ENCODE measurements at regions of chr6 and their contacts with region 1.

Region 1: GRCh38 chr6:32868257-32868788 is 14.3 kb downstream of the PSMB9 start:
- DNase-seq: peak; percentile 90
- H3K4me3 ChIP-seq: peak overlapping the region; percentile 51
- H3K27ac ChIP-seq: peak overlapping the region; percentile 94
- H3K4me1 ChIP-seq: peaks cover 45% of the 10 kb centered on the region
- CTCF ChIP-seq: peak; percentile 99

Region 2: DNA sequence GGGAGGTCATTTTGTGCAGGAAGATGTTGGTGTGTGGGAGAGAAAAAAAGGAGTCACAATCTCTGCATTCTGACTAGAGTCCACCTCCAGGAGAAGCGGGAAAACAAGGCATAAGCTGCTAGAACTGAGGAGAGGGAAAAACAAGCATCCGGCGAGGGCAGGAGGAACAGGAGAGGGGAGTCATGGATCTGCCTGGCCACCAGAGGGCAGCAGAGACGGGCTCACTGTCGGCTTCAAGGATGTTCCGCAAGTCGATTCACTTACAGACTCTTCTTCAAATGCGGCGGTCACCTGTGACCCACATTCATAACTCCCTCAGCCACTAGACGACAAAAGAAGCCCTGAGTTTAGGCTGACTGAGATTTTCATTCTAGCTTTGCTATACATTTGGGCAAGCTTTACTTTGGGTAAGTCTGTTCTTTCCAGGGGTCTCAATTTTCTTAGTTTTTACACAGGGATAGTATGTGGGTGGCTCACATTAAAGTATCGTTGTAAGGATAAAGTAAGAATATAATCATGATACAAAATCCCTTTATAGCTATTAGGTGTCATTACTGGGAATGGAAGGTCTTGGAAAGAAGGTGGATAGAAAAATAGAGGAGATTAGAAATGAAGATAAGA is 454.8 kb before region 1 on chr6:
- CTCF ChIA-PET with region 1: no interaction called
- POLR2A ChIA-PET with region 1: interaction called, 4 read pairs
- intact Hi-C with region 1: loop called (anchors 5 kb)
- DNase-seq: peak; percentile 82
- H3K4me3 ChIP-seq: no peak overlapping the region
- H3K27ac ChIP-seq: no peak overlapping the region
- H3K4me1 ChIP-seq: peaks cover 9% of the 10 kb centered on the region
- CTCF ChIP-seq: peak; percentile 96

Region 3: GRCh38 chr6:32622545-32623401 is 245.6 kb before region 1 on chr6:
- CTCF ChIA-PET with region 1: no interaction called
- POLR2A ChIA-PET with region 1: no interaction called
- intact Hi-C with region 1: loop called (anchors 10 kb)
- DNase-seq: peak; percentile 85
- H3K4me3 ChIP-seq: peak overlapping the region; percentile 49
- H3K27ac ChIP-seq: peak overlapping the region; percentile 91
- H3K4me1 ChIP-seq: peaks cover 69% of the 10 kb centered on the region
- CTCF ChIP-seq: peak; percentile 83

Region 4: GRCh38 chr6:32796848-32797776 is 71.2 kb before region 1 on chr6:
- CTCF ChIA-PET with region 1: interaction called, 7 read pairs
- POLR2A ChIA-PET with region 1: interaction called, 3 read pairs
- intact Hi-C with region 1: loop called (anchors 2 kb)
- DNase-seq: peak; percentile 85
- H3K4me3 ChIP-seq: peak overlapping the region; percentile 44
- H3K27ac ChIP-seq: peak overlapping the region; percentile 57
- H3K4me1 ChIP-seq: peaks cover 34% of the 10 kb centered on the region
- CTCF ChIP-seq: peak; percentile 97

Region 5: DNA sequence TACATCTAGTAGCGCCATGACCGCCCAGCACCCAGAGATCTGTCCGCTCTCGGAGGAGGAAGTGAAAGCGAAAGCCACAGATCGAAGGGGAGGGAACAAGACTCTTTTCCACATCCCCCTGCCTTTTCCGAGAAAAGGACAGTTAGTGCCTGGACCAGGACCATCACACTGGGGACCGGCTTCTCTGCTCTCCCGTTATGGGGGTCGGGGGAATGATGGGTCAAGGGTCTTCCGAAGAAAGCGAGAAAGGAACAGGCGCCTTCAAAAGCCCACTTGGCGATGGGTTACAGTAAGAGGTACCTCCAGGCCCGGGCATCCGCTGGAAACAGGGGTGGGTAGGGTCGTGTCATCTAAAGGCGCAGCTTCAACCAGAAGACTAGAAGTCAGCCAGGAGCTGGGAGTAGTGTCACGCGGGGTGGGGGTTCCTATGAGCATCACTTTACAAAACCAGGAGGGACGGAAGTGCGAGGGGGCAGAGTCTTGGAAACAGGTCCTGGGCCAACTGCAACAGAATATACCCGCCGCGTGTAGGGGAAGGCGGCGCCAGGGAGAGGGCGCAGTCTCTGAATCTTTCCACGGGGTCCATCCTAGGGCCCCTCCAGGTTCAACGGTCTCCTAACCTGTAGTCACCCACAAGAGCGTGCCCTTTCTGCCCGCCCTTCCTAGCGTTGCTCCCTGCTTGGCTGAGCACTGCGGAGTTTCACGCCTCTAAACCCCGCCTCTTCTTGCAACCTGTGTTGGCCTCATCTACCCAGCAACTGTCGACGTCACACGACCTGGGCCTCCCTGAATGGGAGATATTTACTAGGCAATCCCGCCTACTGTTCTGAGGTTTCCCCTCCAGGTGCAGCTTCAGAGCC is 24.1 kb before region 1 on chr6 and contains the start of gene PSMB8:
- CTCF ChIA-PET with region 1: interaction called, 35 read pairs
- POLR2A ChIA-PET with region 1: interaction called, 22 read pairs
- intact Hi-C with region 1: loop called (anchors 1 kb)
- DNase-seq: peak; percentile 98
- H3K4me3 ChIP-seq: peak within 1 kb of the TSS; percentile 77
- H3K27ac ChIP-seq: peak within 1 kb of the TSS; percentile 88
- H3K4me1 ChIP-seq: peaks cover 55% of the 10 kb centered on the region
- CTCF ChIP-seq: 0 out of 2 replicates have a peak, but pooled peaks have one; percentile 9
- total RNA-seq, gene PSMB8: 142 and 164 TPM in 2 replicates

Region 6: GRCh38 chr6:32971581-32972352 is 103.4 kb after region 1 on chr6:
- CTCF ChIA-PET with region 1: no interaction called
- POLR2A ChIA-PET with region 1: interaction called, 12 read pairs
- intact Hi-C with region 1: no loop called
- DNase-seq: peak; percentile 100
- H3K4me3 ChIP-seq: peak overlapping the region; percentile 93
- H3K27ac ChIP-seq: peak overlapping the region; percentile 99
- H3K4me1 ChIP-seq: peaks cover 27% of the 10 kb centered on the region
- CTCF ChIP-seq: no peak

Measured in OCI-LY7 (cell line).